Motor neuron (in vitro differentiated cells): ENCODE measurements at regions of chr9 and their contacts with region 1.

Region 1: GRCh38 chr9:20356403-20357035 is 265.8 kb downstream of the MLLT3 start:
- ATAC-seq: peak; percentile 77 to 97 (median 96)
- H3K4me3 ChIP-seq: peak overlapping the region in 2 of 5 donors; percentile 6 to 8
- H3K27ac ChIP-seq: no peak overlapping the region
- H3K4me1 ChIP-seq: peaks cover 8 to 22% of the 10 kb centered on the region in 2 donors

Region 2: GRCh38 chr9:18985464-18985951 is 1371.0 kb before region 1 on chr9:
- in situ Hi-C with region 1: no loop called
- ATAC-seq: peak in 1 of 8 experiments; percentile 19
- H3K4me3 ChIP-seq: no peak overlapping the region
- H3K27ac ChIP-seq: no peak overlapping the region
- H3K4me1 ChIP-seq: no peaks in the 10 kb centered on the region

Region 3: DNA sequence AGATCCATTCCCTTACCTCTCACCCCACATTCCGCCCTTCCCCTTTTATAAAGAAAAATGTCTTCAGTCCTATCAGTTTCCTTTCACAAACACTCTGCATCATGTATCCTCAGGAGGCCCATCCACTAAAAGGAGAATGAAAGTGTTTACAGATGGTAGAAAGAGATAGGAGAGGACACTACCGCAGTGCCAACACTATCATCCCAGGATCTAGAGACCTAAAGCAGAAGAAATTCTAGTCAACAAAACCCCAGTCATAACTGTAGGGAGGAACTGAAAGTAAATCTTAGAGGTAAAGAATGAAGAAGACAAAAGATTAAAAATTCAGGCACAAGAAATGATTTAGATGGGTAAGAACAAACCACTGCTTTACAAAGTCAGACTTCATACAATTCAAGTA is 151.7 kb after region 1 on chr9:
- in situ Hi-C with region 1: no loop called
- ATAC-seq: no peak
- H3K4me3 ChIP-seq: no peak overlapping the region
- H3K27ac ChIP-seq: no peak overlapping the region
- H3K4me1 ChIP-seq: no peaks in the 10 kb centered on the region

Region 4: DNA sequence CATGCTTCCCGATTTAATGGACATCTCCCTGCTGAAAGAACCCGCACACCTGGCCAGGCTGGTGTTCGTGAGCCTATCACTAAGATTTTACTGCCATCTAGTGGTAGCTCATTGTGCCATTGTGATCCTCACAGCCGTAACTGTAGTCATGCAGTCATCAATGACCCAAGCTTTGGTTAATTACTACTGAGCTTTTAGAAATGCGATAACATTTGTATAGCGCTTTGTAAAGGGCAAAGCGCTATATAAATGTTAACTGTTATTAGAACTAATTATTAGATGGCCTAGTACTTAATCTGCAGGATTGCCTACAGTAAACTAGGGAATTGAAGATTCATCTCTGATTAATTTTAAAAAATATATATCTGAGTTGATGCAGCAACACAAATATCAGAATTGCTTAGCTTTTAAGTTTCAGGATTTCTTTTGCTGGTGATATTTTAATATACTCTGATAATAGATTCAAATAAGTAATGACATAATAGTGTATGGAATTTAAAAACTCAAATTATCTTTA is 584.7 kb after region 1 on chr9:
- in situ Hi-C with region 1: loop called in 2 of 9 experiments (anchors 25 kb)
- ATAC-seq: peak; percentile 81 to 99 (median 97)
- H3K4me3 ChIP-seq: no peak overlapping the region
- H3K27ac ChIP-seq: no peak overlapping the region
- H3K4me1 ChIP-seq: no peaks in the 10 kb centered on the region